ENCODE measurements at regions of chr3 and their contacts with region 1.

Region 1: GRCh38 chr3:55485211-55485791 is 1.8 kb downstream of the WNT5A start:
- DNase-seq: peak; percentile 79 to 91
- ATAC-seq: peak; percentile 82 to 85 (median 84)
- H3K4me3 ChIP-seq: peak overlapping the region; percentile 86
- H3K27ac ChIP-seq: peak overlapping the region; percentile 59
- H3K4me1 ChIP-seq: peaks cover 7% of the 10 kb centered on the region
- H3K27me3 ChIP-seq: peaks cover 0 to 13% (median 2%) of the 10 kb centered on the region in 3 donors
- CTCF ChIP-seq: peak; percentile 81

Region 2: GRCh38 chr3:54853573-54854404 is 631.5 kb before region 1 on chr3:
- intact Hi-C with region 1: loop called in 1 of 2 experiments (anchors 10 kb)
- DNase-seq: peak; percentile 78 to 89
- ATAC-seq: peak; percentile 91 to 97 (median 94)
- H3K4me3 ChIP-seq: no peak overlapping the region
- H3K27ac ChIP-seq: no peak overlapping the region
- H3K4me1 ChIP-seq: peaks cover 4% of the 10 kb centered on the region
- H3K27me3 ChIP-seq: no peaks in the 10 kb centered on the region
- CTCF ChIP-seq: peak; percentile 92

Region 3: GRCh38 chr3:55305696-55306485 is 179.4 kb before region 1 on chr3:
- intact Hi-C with region 1: no loop called
- DNase-seq: peak; percentile 43 to 75
- ATAC-seq: no peak
- H3K4me3 ChIP-seq: no peak overlapping the region
- H3K27ac ChIP-seq: no peak overlapping the region
- H3K4me1 ChIP-seq: no peaks in the 10 kb centered on the region
- H3K27me3 ChIP-seq: no peaks in the 10 kb centered on the region
- CTCF ChIP-seq: no peak

Region 4: DNA sequence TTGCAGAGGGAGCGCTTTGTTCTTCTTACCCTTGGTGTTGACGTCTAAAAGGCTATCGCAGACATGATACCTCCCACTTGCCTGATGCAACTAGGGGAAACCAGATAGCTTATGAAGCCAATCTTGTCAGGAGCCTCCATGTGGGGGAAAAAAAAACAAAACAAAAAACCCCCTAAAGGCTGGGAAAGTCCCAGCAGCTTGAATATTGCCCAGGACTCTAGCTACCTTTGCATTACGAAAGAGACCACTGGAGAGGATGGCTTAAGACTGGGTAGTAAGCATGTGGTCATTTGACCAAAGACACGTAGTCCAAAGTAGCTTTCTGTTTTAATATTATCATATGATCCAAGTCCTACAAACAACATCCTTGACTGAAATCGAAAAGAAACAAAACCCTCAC is 122.5 kb after region 1 on chr3:
- intact Hi-C with region 1: no loop called
- DNase-seq: no peak
- ATAC-seq: no peak
- H3K4me3 ChIP-seq: no peak overlapping the region
- H3K27ac ChIP-seq: no peak overlapping the region
- H3K4me1 ChIP-seq: no peaks in the 10 kb centered on the region
- H3K27me3 ChIP-seq: no peaks in the 10 kb centered on the region
- CTCF ChIP-seq: no peak

Region 5: GRCh38 chr3:55721716-55722484 is 236.6 kb after region 1 on chr3:
- intact Hi-C with region 1: loop called (anchors 5 to 10 kb)
- DNase-seq: peak in 1 of 2 donors; percentile 56
- ATAC-seq: peak in 2 of 4 donors; percentile 13 to 39
- H3K4me3 ChIP-seq: no peak overlapping the region
- H3K27ac ChIP-seq: no peak overlapping the region
- H3K4me1 ChIP-seq: no peaks in the 10 kb centered on the region
- H3K27me3 ChIP-seq: no peaks in the 10 kb centered on the region
- CTCF ChIP-seq: peak; percentile 25

Region 6: DNA sequence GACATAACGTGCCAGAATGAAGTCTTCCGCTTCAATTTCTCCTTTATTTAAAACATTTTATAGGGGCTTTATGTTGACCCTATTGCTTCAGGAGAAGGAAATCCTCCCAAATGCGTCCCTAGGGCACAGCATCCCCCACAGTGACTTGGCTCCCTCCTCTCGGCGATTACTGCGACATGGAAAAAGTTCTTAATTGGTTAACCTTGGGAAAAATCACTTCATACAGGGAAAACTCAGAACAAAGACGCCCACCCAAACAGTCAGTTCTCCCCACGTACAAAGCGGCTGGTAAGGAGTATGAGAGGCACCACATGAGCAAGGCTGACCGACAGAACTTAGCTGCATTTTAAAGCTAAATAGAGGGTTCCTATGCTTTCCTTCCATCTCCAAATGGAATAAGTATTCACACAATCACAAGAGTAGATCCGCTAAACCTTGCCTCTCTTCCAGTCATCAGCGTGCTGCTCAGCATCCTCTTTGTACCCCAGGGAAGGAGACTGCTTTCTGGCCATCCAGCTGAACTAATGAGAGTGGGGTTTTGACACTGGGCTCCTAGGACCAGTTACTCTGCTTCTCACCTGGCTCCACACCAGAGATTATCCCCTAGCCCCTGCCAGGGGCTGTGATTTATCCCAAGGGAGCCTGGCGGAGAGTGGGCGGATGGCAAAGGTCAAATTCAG is 417.1 kb after region 1 on chr3:
- intact Hi-C with region 1: loop called in 1 of 2 experiments (anchors 2 kb)
- DNase-seq: no peak
- ATAC-seq: no peak
- H3K4me3 ChIP-seq: no peak overlapping the region
- H3K27ac ChIP-seq: no peak overlapping the region
- H3K4me1 ChIP-seq: no peaks in the 10 kb centered on the region
- H3K27me3 ChIP-seq: no peaks in the 10 kb centered on the region
- CTCF ChIP-seq: no peak

Region 7: GRCh38 chr3:56251343-56251945 is 766.1 kb after region 1 on chr3:
- intact Hi-C with region 1: loop called (anchors 1 to 5 kb)
- DNase-seq: no peak
- ATAC-seq: peak in 2 of 4 donors; percentile 44 to 60
- H3K4me3 ChIP-seq: no peak overlapping the region
- H3K27ac ChIP-seq: no peak overlapping the region
- H3K4me1 ChIP-seq: no peaks in the 10 kb centered on the region
- H3K27me3 ChIP-seq: no peaks in the 10 kb centered on the region
- CTCF ChIP-seq: peak; percentile 81

Measured in psoas muscle (tissue), 8 donors.